Activated naive CD4-positive, alpha-beta T cell treated with anti-CD3 and anti-CD28 coated beads for 36 hours (primary cell): ENCODE measurements at regions of chr13 and their contacts with region 1.

Region 1: GRCh38 chr13:31161828-31162590 is at the start of gene HSPH1:
- DNase-seq: peak; percentile 99
- H3K4me3 Mint-ChIP-seq: peak within 1 kb of the TSS; percentile 96
- H3K27ac Mint-ChIP-seq: peak within 1 kb of the TSS; percentile 98
- H3K4me1 Mint-ChIP-seq: peaks cover 27% of the 10 kb centered on the region
- H3K27me3 Mint-ChIP-seq: no peaks in the 10 kb centered on the region
- total RNA-seq, gene HSPH1: 122 to 150 TPM

Region 2: DNA sequence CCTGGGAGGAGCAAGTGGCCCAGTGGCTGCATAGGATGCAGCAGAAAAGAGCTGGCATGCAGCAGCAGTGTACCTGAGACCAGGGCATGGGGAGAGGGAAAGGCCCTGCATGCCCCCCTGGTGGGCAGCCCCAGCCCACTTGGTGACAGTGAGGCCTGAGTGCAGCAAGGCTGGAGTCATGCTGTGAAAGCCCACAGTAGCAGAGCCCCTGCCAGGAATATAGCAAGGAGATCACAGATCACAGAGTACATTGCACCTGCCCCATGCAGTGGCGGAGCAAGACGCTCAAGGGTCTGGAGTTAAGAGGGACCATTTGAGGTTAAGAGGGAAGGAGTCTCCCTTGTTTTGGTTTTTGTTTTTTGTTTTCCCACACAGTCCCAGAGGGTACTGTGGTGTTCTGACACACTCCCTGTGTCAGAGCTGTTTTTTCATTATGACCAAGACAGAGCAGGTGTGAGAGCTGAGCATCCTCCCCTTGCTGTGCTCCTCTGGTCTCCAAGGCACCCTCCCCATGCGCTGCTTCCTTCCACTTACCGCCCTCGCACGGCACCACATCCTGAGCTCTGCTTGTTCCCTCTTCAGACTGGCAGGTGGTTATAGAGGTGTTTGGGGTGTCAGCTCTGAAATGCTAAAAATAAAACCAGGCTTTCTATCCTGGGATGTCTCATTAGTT is 1226.6 kb before region 1 on chr13:
- CTCF ChIA-PET with region 1: no interaction called
- intact Hi-C with region 1: loop called (anchors 5 kb)
- DNase-seq: peak; percentile 94
- H3K4me3 Mint-ChIP-seq: peak overlapping the region; percentile 67
- H3K27ac Mint-ChIP-seq: peak overlapping the region; percentile 83
- H3K4me1 Mint-ChIP-seq: peaks cover 39% of the 10 kb centered on the region
- H3K27me3 Mint-ChIP-seq: no peaks in the 10 kb centered on the region

Region 3: GRCh38 chr13:30673669-30674521 is 488.1 kb before region 1 on chr13:
- CTCF ChIA-PET with region 1: no interaction called
- intact Hi-C with region 1: loop called (anchors 5 kb)
- DNase-seq: peak; percentile 84
- H3K4me3 Mint-ChIP-seq: peak overlapping the region; percentile 82
- H3K27ac Mint-ChIP-seq: peak overlapping the region; percentile 41
- H3K4me1 Mint-ChIP-seq: peaks cover 8% of the 10 kb centered on the region
- H3K27me3 Mint-ChIP-seq: no peaks in the 10 kb centered on the region

Region 4: DNA sequence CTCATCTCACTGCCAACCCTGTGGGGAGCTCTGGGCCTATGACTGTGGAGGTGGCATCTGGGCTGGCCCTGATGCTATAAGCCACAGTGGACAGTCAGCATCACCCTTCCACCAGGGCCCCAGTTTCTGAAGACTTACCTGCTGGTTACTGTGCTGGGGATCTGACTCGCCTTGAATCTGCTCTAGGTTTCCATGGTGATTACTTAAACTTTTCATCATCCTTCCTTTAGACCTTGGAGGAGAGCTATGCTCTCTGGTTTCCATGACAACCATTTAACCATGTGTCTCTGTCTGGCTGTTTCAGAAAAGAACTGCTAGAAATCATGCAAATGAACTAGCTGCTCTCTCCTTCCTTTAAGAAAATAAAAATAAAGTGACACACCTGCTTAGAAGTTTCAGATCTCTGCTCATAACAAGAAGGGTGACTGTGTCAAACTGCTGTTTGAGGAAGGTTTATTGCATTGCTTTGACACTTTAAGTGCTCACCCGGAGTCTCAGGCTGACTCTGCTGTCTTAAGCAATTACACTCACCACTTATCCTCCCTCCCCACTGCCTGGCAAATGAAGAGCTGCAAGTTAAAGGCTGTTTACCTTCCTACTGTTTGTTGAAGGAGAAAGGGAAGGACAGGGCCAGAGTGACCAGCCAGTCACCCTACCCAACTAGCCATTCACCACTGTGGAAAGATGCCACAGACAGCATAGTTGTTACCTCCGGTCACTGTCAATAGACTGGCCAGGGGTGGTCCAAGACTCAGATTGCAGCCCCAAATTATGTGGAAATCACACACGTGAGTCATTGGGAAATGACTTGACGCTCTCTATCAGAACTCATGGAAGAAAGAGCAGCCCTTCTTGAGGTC is 87.9 kb before region 1 on chr13:
- CTCF ChIA-PET with region 1: no interaction called
- intact Hi-C with region 1: loop called (anchors 1 kb)
- DNase-seq: peak; percentile 70
- H3K4me3 Mint-ChIP-seq: no peak overlapping the region
- H3K27ac Mint-ChIP-seq: no peak overlapping the region
- H3K4me1 Mint-ChIP-seq: peaks cover 9% of the 10 kb centered on the region
- H3K27me3 Mint-ChIP-seq: peaks cover 3% of the 10 kb centered on the region

Region 5: GRCh38 chr13:32045982-32046785 is 884.2 kb after region 1 on chr13:
- CTCF ChIA-PET with region 1: no interaction called
- intact Hi-C with region 1: loop called (anchors 10 kb)
- DNase-seq: peak; percentile 61
- H3K4me3 Mint-ChIP-seq: peak overlapping the region; percentile 55
- H3K27ac Mint-ChIP-seq: peak overlapping the region; percentile 93
- H3K4me1 Mint-ChIP-seq: peaks cover 69% of the 10 kb centered on the region
- H3K27me3 Mint-ChIP-seq: no peaks in the 10 kb centered on the region

Region 6: DNA sequence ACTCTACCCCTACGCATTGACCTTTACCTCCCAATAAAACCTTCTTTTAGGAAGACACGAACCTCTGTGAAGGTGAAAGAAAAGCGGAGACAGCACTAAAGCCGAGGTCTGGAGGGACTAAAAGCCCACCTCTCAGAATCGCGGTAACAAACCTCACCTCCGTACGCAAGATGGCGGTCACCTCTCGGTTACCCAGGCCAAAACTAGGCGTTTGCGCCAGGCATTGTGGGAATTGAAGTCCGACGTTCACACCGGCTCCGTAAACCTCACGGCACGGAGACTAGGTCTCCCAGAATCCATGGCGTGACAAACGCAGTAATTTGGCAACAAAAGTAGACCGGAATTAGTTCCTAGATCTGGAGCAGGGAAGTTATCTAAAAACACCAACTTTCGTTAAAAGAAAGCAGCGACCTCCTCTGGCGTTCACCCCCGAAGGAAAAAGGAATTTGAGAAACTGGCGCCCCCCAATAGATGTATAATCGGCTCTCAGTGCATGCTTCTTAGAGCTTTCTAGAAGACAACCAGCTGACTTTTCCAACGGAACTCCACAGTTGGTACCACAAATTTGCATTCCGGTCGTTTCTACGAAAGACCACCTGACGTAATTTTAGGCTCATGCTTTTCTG is 1376.7 kb after region 1 on chr13 and contains the start of gene N4BP2L2:
- CTCF ChIA-PET with region 1: no interaction called
- intact Hi-C with region 1: loop called (anchors 5 kb)
- DNase-seq: peak; percentile 96
- H3K4me3 Mint-ChIP-seq: peak within 1 kb of the TSS; percentile 97
- H3K27ac Mint-ChIP-seq: peak within 1 kb of the TSS; percentile 99
- H3K4me1 Mint-ChIP-seq: peaks cover 37% of the 10 kb centered on the region
- H3K27me3 Mint-ChIP-seq: no peaks in the 10 kb centered on the region
- total RNA-seq, gene N4BP2L2: 81.1 to 82.3 TPM